Left cardiac atrium (tissue), 4 donors: ENCODE measurements at regions of chr11 and their contacts with region 1.

Region 1: DNA sequence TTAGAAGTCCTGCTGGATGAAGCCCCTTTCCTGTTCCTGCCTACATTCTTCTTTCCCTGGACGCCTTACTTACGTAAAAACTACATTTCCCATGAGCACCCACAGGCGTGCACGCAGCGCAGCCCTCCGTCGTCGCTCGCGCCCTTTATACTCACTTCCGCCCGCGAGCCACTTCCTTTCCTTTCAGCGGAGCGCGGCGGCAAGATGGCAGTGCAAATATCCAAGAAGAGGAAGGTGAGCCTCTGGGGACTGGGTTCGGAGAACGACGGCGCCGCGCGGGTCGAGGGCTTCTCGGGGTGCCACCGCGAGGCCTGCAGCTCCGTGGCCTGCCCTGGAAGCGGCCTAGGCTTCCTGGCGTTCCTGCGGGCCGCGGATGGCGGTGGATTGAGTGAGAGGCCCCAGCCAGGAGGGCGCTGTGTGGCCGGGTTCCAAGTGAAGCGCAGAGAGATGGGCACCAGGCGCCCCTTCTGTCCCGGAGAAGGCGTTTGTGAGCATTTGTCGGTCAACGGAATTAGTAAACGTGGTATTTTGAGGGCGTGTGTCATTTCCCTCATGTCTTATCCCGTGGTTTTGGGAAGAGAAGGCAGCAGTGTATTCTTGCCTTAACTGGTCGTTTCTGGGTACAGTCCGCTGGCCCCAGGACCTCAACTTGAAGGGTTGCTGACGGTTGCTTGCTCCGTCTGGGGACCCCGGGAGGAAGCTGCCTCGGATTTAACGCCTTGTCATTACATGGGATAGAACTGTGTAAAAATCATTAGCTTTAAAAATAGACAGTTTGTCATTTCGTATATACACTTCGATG is at the start of gene RPS3:
- DNase-seq: peak; percentile 95
- ATAC-seq: peak; percentile 97 to 98
- total RNA-seq, gene RPS3: 1,106 to 1,117 TPM

Region 2: GRCh38 chr11:74559110-74559933 is 840.2 kb before region 1 on chr11:
- intact Hi-C with region 1: no loop called
- DNase-seq: no peak
- ATAC-seq: peak; percentile 44 to 47

Region 3: GRCh38 chr11:75445315-75445953 is 45.9 kb after region 1 on chr11:
- intact Hi-C with region 1: loop called in 1 of 2 experiments (anchors 10 kb)
- DNase-seq: peak; percentile 71
- ATAC-seq: peak; percentile 77 to 80

Region 4: DNA sequence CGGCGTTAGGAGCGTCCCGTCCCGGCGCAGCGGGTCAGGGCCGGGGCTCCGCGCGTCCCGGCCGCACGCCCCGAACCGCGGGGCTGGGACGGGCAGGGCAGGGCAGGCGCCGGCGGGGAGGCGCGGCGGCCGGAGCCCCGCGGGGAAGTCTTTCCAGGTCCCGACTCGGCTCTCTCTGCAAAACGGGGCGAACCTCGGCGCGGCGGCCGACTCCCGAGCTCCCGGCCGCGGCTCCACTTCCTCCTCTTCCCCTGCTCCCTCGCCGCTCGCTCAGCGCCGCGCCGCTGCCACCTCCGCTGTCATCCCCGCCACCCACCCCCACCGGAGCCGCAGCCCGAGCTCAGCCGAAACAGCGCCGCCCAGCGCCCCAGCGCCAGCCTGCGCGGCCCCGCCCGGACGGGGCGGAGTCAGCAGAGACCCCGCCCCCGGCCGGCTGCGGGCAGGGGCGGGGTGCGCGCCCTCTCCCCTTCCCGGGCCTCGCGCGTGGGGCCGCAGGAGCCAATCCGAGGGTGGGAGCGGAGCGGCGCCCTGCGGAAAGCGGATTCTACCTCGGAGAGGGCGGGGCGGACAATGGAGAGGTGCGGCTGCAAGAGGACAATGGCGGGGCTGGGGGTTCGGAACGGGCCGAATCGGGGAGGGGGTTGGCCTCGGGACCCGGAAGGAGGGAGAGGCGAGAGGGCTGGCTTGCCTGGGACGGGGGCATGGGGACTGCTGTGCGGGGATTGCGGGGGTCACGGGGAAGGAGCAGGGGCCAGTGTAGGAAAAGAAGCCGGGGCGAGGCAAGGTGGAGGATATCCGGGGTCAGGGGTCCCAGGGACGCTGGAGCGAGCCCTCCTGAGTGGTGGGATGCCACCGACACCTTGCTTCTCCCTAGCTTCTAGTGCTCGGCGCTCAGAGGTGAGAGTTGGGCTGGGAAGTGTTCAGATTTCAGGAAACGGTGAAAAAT is 126.3 kb after region 1 on chr11 and contains the start of gene GDPD5:
- intact Hi-C with region 1: loop called (anchors 5 kb)
- DNase-seq: peak; percentile 86
- ATAC-seq: peak; percentile 97 to 98
- total RNA-seq, gene GDPD5: 12.3 to 17.6 TPM